HEK293T (cell line): ENCODE measurements at regions of chr19 and their contacts with region 1.

Region 1: DNA sequence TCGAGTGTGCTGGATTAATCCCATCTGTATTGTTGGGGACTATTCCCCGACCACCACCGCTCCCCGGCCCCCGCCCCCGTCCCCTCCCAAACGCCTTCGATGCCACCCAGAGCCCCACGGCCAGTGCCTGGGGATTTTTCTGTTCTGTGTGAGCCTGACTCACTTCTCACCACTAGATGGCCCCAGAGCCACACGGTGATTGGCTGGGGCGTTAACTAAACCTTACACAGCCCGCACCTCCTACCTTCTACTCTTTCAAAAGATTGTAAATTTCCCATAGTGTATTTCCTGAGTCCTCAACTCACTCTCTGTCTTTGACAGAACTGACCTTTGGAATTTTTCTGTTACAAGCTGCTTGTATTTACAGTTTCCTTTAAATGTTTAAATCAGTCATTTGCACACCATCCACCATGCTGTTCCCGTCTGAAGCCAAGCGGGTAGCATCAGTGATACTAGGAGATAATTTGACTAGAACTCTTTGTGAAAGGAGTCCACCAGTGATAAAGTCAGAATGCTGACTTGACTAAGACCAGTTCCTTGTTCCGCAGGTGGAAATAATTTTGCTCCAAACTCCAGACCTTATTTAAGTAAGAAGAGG is 61.4 kb downstream of the RFX2 start:
- DNase-seq: peak; percentile 87

Region 2: DNA sequence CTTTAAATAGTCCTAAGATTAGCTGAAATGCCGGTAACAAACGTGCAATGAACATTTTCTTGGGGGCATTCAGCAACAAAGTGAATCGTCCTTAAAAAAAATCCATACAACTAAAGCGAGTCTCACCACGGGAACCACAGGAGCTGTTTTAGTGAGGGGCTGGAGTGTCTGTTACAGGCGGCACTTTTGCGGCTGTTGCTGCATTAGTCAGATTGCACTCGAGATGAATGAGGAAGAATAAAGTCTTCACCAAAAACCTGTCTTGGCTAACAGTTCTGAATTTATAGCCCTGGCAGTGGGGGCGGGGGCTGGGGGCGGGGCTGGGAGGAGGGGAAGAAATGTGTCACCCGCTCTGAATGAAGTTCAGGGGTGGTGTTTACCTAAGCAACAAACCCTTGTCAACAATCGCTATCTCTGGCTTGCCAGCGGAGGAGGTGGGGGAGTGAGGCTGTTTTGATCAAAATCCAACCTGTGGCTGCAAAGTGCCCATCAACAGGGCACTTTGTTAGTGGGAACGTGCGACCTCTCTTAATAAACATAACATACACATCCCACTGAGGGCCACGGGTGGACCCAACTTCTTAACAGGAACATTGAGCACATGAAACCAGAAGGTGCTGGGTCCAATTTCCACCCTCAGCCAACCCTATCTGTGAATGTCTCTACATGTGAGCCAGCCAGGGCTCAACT is 16.9 kb after region 1 on chr19:
- CTCF ChIA-PET with region 1: no interaction called
- POLR2A ChIA-PET with region 1: no interaction called
- DNase-seq: no peak

Region 3: GRCh38 chr19:6125571-6125989 is 76.7 kb after region 1 on chr19:
- CTCF ChIA-PET with region 1: interaction called, 20 read pairs
- POLR2A ChIA-PET with region 1: interaction called, 3 read pairs
- DNase-seq: peak; percentile 71

Region 4: GRCh38 chr19:6138066-6138465 is 89.2 kb after region 1 on chr19:
- CTCF ChIA-PET with region 1: no interaction called
- POLR2A ChIA-PET with region 1: no interaction called
- DNase-seq: no peak